Activated CD4-positive, alpha-beta memory T cell treated with anti-CD3 and anti-CD28 coated beads for 36 hours (primary cell): ENCODE measurements at regions of chr6 and their contacts with region 1.

Region 1: GRCh38 chr6:155523821-155524651 is 68.4 kb upstream of the NOX3 start:
- DNase-seq: peak; percentile 55
- H3K4me3 Mint-ChIP-seq: no peak overlapping the region
- H3K27ac Mint-ChIP-seq: peak overlapping the region; percentile 90
- H3K4me1 Mint-ChIP-seq: peaks cover 34% of the 10 kb centered on the region
- H3K27me3 Mint-ChIP-seq: peaks cover 1% of the 10 kb centered on the region

Region 2: DNA sequence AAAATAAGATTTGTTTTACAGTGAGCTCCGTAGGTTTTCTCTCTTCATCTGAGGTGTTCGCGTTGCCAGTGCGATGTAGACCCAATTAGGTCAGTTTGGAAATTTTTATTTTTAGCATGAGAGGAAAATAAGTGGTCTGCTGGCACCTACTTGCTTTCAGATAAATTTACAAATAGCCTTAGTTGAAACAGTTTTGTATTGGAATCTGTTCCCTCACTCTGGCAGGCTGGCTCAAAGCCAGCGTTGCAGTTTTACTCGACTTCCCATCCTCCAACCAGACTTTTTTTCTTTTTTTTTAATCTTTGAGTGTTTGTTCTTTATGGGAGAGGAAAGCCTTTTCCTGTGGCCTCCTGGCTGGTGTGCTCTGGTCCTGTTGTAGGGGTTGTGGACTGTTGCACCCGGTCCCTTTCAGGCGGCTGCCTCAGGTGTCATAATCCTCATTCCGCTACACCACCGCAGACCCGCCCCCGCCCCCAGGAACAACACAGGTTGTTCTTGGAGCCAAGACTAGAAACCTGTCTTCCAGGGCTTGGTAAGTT is 482.2 kb before region 1 on chr6:
- CTCF ChIA-PET with region 1: no interaction called
- POLR2A ChIA-PET with region 1: no interaction called
- intact Hi-C with region 1: no loop called
- DNase-seq: no peak
- H3K4me3 Mint-ChIP-seq: no peak overlapping the region
- H3K27ac Mint-ChIP-seq: no peak overlapping the region
- H3K4me1 Mint-ChIP-seq: peaks cover 3% of the 10 kb centered on the region
- H3K27me3 Mint-ChIP-seq: no peaks in the 10 kb centered on the region

Region 3: DNA sequence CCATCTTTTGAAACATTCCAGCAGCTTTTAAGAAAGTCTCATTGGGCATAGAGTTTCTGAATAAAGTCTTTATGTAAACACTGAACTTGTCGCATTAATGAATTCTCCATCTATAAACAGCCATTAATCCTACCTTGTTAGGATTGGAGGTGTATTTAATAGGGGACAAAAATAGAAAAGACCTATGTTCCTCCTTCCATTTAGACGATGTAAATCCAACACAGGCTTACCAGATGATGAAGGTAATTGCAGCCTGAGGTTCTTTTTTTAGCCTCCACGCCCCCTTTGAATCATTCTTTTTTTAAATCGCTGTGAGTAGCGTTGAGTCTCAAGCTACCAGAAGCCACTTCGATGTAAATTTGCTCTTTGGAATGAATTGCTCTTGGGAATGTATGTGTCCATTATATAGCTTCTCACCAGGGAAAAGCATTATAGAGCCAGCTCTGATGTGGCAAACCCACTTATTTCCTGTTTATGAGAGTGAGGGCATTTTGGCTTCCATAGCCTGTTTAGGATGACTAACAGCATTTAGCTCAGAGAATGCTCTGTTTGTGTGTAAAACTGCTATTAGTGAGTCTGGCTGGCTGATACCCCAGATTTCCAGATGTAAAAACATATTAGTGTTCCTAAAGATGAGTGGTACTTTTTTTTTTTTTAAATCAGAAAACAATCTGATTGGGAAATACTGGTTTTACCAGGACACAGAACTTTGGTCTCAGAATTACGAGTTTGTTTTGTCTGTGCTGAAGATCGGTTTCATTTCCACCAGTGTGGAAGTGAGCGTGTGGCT is 335.1 kb before region 1 on chr6:
- CTCF ChIA-PET with region 1: no interaction called
- POLR2A ChIA-PET with region 1: no interaction called
- intact Hi-C with region 1: loop called (anchors 2 kb)
- DNase-seq: no peak
- H3K4me3 Mint-ChIP-seq: peak overlapping the region; percentile 37
- H3K27ac Mint-ChIP-seq: peak overlapping the region; percentile 57
- H3K4me1 Mint-ChIP-seq: peaks cover 41% of the 10 kb centered on the region
- H3K27me3 Mint-ChIP-seq: no peaks in the 10 kb centered on the region

Region 4: GRCh38 chr6:155444952-155445903 is 78.8 kb before region 1 on chr6:
- CTCF ChIA-PET with region 1: interaction called, 3 read pairs
- POLR2A ChIA-PET with region 1: no interaction called
- intact Hi-C with region 1: loop called (anchors 1 kb)
- DNase-seq: peak; percentile 55
- H3K4me3 Mint-ChIP-seq: no peak overlapping the region
- H3K27ac Mint-ChIP-seq: peak overlapping the region; percentile 2
- H3K4me1 Mint-ChIP-seq: peaks cover 16% of the 10 kb centered on the region
- H3K27me3 Mint-ChIP-seq: peaks cover 8% of the 10 kb centered on the region

Region 5: GRCh38 chr6:155510879-155511278 is 13.2 kb before region 1 on chr6:
- CTCF ChIA-PET with region 1: interaction called, 3 read pairs
- POLR2A ChIA-PET with region 1: no interaction called
- intact Hi-C with region 1: loop called (anchors 1 kb)
- DNase-seq: no peak
- H3K4me3 Mint-ChIP-seq: no peak overlapping the region
- H3K27ac Mint-ChIP-seq: peak overlapping the region; percentile 60
- H3K4me1 Mint-ChIP-seq: peaks cover 19% of the 10 kb centered on the region
- H3K27me3 Mint-ChIP-seq: peaks cover 5% of the 10 kb centered on the region

Region 6: GRCh38 chr6:155599561-155599960 is 75.5 kb after region 1 on chr6:
- CTCF ChIA-PET with region 1: no interaction called
- POLR2A ChIA-PET with region 1: no interaction called
- intact Hi-C with region 1: no loop called
- DNase-seq: no peak
- H3K4me3 Mint-ChIP-seq: no peak overlapping the region
- H3K27ac Mint-ChIP-seq: no peak overlapping the region
- H3K4me1 Mint-ChIP-seq: no peaks in the 10 kb centered on the region
- H3K27me3 Mint-ChIP-seq: peaks cover 2% of the 10 kb centered on the region

Region 7: DNA sequence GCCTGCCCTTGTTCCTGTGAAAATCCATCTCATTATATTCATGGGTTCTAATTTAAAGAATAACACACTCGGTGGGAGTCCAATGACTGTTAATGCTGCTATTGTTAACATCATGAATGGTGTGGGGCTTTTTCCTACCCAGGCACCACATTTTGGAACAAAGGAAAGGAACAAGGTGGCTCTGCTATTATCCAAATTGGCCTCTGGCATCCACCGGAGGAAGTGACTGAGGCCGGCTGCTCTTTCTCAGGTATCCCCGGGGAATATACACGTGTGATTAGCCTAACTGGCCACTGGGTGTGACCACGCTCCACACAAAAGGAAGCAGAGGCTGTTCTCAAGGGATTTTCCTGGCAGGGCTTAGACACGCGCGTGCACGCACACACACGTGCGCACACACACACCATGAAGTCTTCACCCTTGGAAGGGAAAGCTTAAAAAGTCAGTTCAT is 652.0 kb after region 1 on chr6:
- CTCF ChIA-PET with region 1: no interaction called
- POLR2A ChIA-PET with region 1: no interaction called
- intact Hi-C with region 1: loop called (anchors 1 kb)
- DNase-seq: no peak
- H3K4me3 Mint-ChIP-seq: no peak overlapping the region
- H3K27ac Mint-ChIP-seq: peak overlapping the region; percentile 35
- H3K4me1 Mint-ChIP-seq: peaks cover 24% of the 10 kb centered on the region
- H3K27me3 Mint-ChIP-seq: no peaks in the 10 kb centered on the region